Activated naive CD4-positive, alpha-beta T cell treated with anti-CD3 and anti-CD28 coated beads for 36 hours (primary cell): ENCODE measurements at regions of chr12 and their contacts with region 1.

Region 1: DNA sequence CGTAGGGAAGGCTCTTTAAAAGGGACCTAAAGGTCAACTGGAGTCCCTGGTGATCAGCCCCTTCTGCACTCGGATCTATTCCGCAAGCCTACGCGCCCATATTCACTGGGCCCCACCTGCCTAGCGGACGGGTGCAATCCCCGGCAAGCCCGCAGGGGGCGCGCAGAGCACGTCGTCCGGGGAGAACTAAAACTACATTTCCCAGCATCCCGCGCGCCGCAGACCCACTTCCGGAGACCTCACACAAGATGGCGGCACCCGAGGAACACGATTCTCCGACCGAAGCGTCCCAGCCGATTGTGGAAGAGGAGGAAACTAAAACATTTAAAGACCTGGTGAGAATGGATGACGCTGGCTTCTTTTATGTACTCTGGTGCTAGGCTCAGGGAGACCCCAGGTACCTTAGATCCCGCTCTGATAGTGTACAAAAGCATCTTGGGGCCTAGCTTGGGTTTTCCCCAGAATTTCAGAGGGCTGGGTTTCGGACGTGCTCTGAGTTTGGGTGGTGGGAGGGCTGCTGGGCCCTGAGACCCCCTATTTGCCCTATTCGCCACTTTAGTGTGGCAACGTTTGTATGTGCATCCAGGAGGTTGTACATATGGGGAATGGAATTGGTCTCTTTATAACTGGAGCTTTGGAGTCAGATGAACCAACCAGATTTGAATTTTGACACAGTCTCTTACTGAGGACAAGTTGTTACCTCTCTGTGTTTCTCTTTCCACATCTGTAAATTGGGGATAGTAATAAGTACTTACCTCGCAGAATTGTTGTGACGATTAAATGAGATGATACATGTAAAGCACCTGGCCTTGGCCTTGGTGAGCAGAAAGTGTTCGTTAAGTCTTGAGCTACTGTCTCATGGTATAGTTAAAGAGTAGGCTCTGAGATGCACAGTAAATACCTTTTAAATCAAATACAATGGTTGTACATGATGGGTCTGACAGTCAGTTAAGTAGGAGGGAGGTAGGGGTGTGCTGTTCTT is at the start of gene DDX47:
- DNase-seq: peak; percentile 99
- H3K4me3 Mint-ChIP-seq: peak within 1 kb of the TSS; percentile 99
- H3K27ac Mint-ChIP-seq: peak within 1 kb of the TSS; percentile 93
- H3K4me1 Mint-ChIP-seq: peaks cover 57% of the 10 kb centered on the region
- H3K27me3 Mint-ChIP-seq: no peaks in the 10 kb centered on the region
- total RNA-seq, gene DDX47: 86.6 to 87.3 TPM

Region 2: GRCh38 chr12:12636641-12637040 is 176.8 kb before region 1 on chr12:
- CTCF ChIA-PET with region 1: no interaction called
- intact Hi-C with region 1: no loop called
- DNase-seq: no peak
- H3K4me3 Mint-ChIP-seq: no peak overlapping the region
- H3K27ac Mint-ChIP-seq: peak overlapping the region; percentile 64
- H3K4me1 Mint-ChIP-seq: peaks cover 9% of the 10 kb centered on the region
- H3K27me3 Mint-ChIP-seq: no peaks in the 10 kb centered on the region

Region 3: DNA sequence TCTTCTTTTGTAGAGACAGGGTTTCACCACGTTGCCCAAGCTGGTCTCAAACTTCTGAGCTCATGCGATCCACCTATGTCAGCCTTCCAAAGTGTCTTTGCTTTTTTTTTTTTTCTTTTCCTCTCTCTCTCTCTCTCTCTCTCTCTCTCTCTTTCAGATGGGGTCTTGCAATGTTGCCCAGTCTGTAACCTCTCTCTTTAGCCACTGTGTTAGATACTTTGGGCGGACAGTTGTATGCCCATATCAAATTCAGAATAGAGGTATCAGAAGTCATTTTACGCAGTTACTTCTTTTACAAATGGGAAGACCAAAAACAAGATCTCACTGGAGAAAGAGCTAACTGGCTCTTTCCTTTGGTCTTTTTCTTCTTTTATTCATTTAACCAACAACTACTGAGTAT is 180.0 kb after region 1 on chr12:
- CTCF ChIA-PET with region 1: no interaction called
- intact Hi-C with region 1: no loop called
- DNase-seq: no peak
- H3K4me3 Mint-ChIP-seq: no peak overlapping the region
- H3K27ac Mint-ChIP-seq: no peak overlapping the region
- H3K4me1 Mint-ChIP-seq: peaks cover 27% of the 10 kb centered on the region
- H3K27me3 Mint-ChIP-seq: no peaks in the 10 kb centered on the region

Region 4: DNA sequence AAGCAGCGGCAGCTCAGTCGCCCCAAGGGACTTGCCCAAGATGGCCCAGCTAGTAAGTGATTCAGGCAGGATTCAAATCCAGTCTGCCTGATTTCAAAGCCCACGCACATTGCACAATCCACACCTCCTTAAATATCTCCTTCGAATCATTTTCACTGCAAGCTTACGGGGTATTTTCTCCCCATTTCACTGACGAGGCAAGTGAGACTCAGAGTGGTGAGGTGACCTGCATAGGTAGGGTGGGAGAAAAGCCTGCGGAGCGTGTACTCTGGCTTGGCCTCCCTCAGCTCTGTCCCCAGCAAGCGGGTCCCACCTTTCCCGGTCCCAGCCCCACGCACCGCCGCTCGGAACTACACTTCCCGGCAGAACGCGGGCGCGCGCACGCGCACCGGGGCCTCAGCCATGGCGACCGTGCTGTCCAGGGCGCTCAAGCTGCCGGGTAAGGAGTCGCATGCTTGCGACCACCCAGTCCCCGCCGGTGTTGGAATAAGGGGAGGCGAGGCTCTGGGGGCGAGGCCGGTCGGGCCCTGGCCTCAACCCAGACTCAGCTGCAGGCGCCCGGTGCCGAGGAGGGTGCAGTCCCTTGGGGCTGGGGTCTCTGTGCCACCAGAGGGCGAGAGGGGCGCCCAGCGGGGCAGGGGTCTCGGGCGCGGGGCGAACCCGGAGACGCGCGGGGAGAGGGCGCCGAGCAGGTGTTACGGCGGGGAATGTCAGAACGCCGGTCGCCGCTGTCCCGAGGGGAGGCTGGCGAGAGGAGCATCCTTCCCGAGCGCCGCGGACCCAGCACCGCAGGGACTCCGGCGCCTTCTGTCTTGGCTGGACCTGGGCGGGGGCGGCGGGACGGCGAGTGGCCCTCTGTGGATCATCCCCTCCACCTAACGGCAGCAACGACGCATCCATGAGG is 230.8 kb after region 1 on chr12 and contains the start of gene FAM234B:
- CTCF ChIA-PET with region 1: no interaction called
- intact Hi-C with region 1: loop called (anchors 5 kb)
- DNase-seq: peak; percentile 73
- H3K4me3 Mint-ChIP-seq: peak within 1 kb of the TSS; percentile 79
- H3K27ac Mint-ChIP-seq: no peak within 1 kb of the TSS
- H3K4me1 Mint-ChIP-seq: peaks cover 16% of the 10 kb centered on the region
- H3K27me3 Mint-ChIP-seq: no peaks in the 10 kb centered on the region
- total RNA-seq, gene FAM234B: 7.4 to 7.7 TPM